Activated B cell treated with CpG ODN at 0.5 μM for 24 hours (primary cell): ENCODE measurements at regions of chr1 and their contacts with region 1.

Region 1: DNA sequence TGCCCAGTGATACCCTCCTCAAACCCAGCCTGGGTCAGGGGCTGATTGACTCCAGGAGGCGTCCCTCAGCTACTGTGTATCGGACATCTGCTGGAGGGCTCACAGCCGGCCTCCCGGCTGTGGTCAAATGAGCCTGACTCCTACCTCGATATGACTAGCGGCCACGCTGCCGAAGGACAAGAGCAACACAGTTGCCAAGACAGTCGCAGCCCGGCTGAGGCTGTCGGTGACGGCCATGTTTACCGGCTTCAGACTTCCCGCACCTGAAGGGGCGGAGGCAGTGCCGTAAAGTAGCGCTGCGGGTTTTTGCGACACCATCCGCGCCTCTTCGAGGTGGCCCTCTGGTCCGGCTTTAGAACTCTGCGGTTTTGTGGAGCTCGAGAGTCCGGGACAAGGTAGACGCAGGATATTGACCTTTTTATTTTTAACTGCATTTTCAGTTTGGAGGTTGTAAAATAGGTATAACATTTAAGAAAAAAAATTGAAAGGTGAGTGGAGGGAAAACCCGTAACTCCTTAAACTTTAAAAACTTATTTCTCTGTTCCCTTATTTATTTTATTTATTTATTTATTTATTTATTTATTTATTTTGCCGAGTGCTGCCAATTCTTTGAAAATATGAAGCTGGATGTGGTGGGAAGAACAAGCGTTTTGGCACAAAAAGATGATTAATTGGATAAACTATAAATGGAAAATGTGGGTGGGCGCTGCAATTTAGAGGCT is at the start of gene PIGK:
- DNase-seq: peak; percentile 77
- ATAC-seq: peak; percentile 98
- H3K4me3 Mint-ChIP-seq: peak within 1 kb of the TSS; percentile 95
- H3K27ac Mint-ChIP-seq: peak within 1 kb of the TSS; percentile 89
- H3K4me1 Mint-ChIP-seq: peaks cover 26% of the 10 kb centered on the region
- H3K27me3 Mint-ChIP-seq: no peaks in the 10 kb centered on the region
- CTCF ChIP-seq: no peak
- total RNA-seq, gene PIGK: 10.8 and 11.1 TPM in 2 replicates

Region 2: GRCh38 chr1:77202751-77203150 is 16.6 kb before region 1 on chr1:
- CTCF ChIA-PET with region 1: no interaction called
- POLR2A ChIA-PET with region 1: no interaction called
- intact Hi-C with region 1: no loop called
- DNase-seq: no peak
- ATAC-seq: no peak
- H3K4me3 Mint-ChIP-seq: no peak overlapping the region
- H3K27ac Mint-ChIP-seq: no peak overlapping the region
- H3K4me1 Mint-ChIP-seq: no peaks in the 10 kb centered on the region
- H3K27me3 Mint-ChIP-seq: no peaks in the 10 kb centered on the region
- CTCF ChIP-seq: no peak

Region 3: GRCh38 chr1:77539519-77540142 is 320.3 kb after region 1 on chr1:
- CTCF ChIA-PET with region 1: no interaction called
- POLR2A ChIA-PET with region 1: no interaction called
- intact Hi-C with region 1: loop called (anchors 2 kb)
- DNase-seq: no peak
- ATAC-seq: no peak
- H3K4me3 Mint-ChIP-seq: peak overlapping the region; percentile 59
- H3K27ac Mint-ChIP-seq: peak overlapping the region; percentile 88
- H3K4me1 Mint-ChIP-seq: peaks cover 31% of the 10 kb centered on the region
- H3K27me3 Mint-ChIP-seq: no peaks in the 10 kb centered on the region
- CTCF ChIP-seq: no peak

Region 4: DNA sequence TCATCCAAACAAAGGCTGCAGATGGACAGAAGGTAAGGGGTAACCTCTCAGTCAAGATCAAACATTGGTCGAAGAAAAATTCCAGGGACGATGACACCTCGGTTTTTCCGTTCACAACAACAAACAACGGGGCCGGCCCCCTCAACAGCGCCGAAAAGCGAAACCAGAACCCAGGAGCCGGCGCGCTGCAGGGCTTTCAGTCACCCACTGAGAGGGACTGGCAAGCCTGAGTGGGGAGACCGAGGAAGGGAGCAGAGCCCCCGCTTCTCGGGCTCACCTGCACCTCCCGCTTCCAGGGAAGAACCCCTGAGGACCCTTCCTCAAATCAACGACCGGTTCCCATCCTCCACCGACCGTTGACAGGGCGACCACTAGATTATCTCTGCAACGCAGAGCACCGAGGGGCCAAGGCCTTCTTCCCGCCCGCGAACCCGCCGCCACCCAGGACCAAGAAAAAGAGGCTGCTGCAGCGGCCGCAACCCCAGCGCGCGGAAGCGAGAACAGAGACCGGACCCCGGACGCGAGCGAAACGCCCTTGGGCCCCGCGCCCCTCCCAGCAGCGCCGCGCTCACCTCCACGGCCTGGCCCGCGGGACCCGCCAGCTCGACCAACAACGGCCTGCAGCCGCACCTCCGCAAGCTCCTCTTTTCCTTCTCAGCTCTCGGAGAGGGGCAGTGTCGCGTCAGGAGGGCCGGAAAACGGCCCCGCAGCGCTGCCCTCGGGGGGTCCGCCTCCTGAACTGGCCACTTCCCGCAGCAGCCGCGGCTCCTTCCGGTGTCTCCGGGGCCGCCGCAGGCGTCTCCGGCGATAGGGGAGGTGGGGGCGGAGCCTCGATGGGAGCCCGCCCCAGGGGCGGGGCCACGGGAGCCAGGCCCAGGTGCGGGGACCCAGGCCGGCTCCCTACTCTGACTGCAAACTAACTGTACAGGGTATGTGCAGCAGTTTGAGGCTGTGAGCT is 540.0 kb after region 1 on chr1 and contains the start of gene USP33:
- CTCF ChIA-PET with region 1: no interaction called
- POLR2A ChIA-PET with region 1: no interaction called
- intact Hi-C with region 1: loop called (anchors 5 kb)
- DNase-seq: peak; percentile 95
- ATAC-seq: peak; percentile 97
- H3K4me3 Mint-ChIP-seq: peak within 1 kb of the TSS; percentile 93
- H3K27ac Mint-ChIP-seq: peak within 1 kb of the TSS; percentile 87
- H3K4me1 Mint-ChIP-seq: peaks cover 32% of the 10 kb centered on the region
- H3K27me3 Mint-ChIP-seq: peaks cover 2% of the 10 kb centered on the region
- CTCF ChIP-seq: no peak
- total RNA-seq, gene USP33: 42.1 and 58.4 TPM in 2 replicates